AG04449 (cell line): ENCODE measurements at regions of chr17 and their contacts with region 1.

Region 1: GRCh38 chr17:75059369-75060345 is 12.6 kb downstream of the KCTD2 start:
- DNase-seq: no peak
- H3K4me3 ChIP-seq: no peak overlapping the region
- CTCF ChIP-seq: peak; percentile 53

Region 2: GRCh38 chr17:74981979-74982662 is 77.5 kb before region 1 on chr17:
- CTCF ChIA-PET with region 1: no interaction called
- POLR2A ChIA-PET with region 1: no interaction called
- DNase-seq: no peak
- H3K4me3 ChIP-seq: peak overlapping the region; percentile 72
- CTCF ChIP-seq: no peak

Region 3: GRCh38 chr17:75046582-75047289 is 12.9 kb before region 1 on chr17 and contains the starts of genes ATP5PD and KCTD2:
- CTCF ChIA-PET with region 1: interaction called, 52 read pairs
- POLR2A ChIA-PET with region 1: interaction called, 5 read pairs
- DNase-seq: peak; percentile 77
- H3K4me3 ChIP-seq: peak within 1 kb of the TSS; percentile 99
- CTCF ChIP-seq: no peak

Region 4: GRCh38 chr17:75087558-75088453 is 28.1 kb after region 1 on chr17 and contains the start of gene SLC16A5:
- CTCF ChIA-PET with region 1: interaction called, 11 read pairs
- POLR2A ChIA-PET with region 1: interaction called, 3 read pairs
- DNase-seq: no peak
- H3K4me3 ChIP-seq: peak within 1 kb of the TSS; percentile 69
- CTCF ChIP-seq: no peak

Region 5: GRCh38 chr17:75173526-75173925 is 113.9 kb after region 1 on chr17:
- CTCF ChIA-PET with region 1: interaction called, 45 read pairs
- POLR2A ChIA-PET with region 1: interaction called, 3 read pairs
- DNase-seq: no peak
- H3K4me3 ChIP-seq: no peak overlapping the region
- CTCF ChIP-seq: no peak

Region 6: GRCh38 chr17:75412455-75413317 is 353.0 kb after region 1 on chr17:
- CTCF ChIA-PET with region 1: interaction called, 16 read pairs
- POLR2A ChIA-PET with region 1: no interaction called
- DNase-seq: no peak
- H3K4me3 ChIP-seq: peak overlapping the region; percentile 20
- CTCF ChIP-seq: peak; percentile 83